Ascending aorta (tissue), 2 donors: ENCODE measurements at regions of chr11 and their contacts with region 1.

Region 1: GRCh38 chr11:12281571-12282478 is 95.5 kb upstream of the PARVA start:
- DNase-seq: peak in 1 of 2 donors; percentile 94
- H3K4me3 ChIP-seq: no peak overlapping the region
- H3K27ac ChIP-seq: peak overlapping the region; percentile 9 to 55
- H3K4me1 ChIP-seq: peaks cover 6 to 34% of the 10 kb centered on the region in 2 donors
- H3K27me3 ChIP-seq: no peaks in the 10 kb centered on the region
- CTCF ChIP-seq: peak; percentile 94 to 97 (median 97)

Region 2: DNA sequence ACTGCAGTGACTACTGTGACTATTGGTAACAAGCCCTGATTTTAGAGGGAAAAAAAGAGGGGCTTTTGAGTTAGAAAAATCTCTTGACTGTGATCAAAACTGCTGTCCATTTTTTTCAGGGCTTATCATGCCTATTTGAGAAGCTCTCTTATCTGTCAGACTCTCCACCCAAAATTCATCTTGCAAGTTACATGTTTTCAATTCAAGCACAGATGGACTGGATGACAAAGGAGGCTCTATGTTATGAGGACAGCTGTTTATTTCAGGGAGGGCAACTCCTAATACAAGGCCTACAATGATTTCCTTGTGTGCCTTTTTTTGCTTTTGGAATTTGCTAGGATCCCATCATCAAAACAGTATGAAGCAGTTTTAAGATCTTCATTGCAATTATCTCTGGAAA is 475.2 kb before region 1 on chr11:
- intact Hi-C with region 1: loop called (anchors 10 kb)
- DNase-seq: no peak
- H3K4me3 ChIP-seq: no peak overlapping the region
- H3K27ac ChIP-seq: no peak overlapping the region
- H3K4me1 ChIP-seq: peaks cover 0 to 3% of the 10 kb centered on the region in 2 donors
- H3K27me3 ChIP-seq: no peaks in the 10 kb centered on the region
- CTCF ChIP-seq: no peak

Region 3: DNA sequence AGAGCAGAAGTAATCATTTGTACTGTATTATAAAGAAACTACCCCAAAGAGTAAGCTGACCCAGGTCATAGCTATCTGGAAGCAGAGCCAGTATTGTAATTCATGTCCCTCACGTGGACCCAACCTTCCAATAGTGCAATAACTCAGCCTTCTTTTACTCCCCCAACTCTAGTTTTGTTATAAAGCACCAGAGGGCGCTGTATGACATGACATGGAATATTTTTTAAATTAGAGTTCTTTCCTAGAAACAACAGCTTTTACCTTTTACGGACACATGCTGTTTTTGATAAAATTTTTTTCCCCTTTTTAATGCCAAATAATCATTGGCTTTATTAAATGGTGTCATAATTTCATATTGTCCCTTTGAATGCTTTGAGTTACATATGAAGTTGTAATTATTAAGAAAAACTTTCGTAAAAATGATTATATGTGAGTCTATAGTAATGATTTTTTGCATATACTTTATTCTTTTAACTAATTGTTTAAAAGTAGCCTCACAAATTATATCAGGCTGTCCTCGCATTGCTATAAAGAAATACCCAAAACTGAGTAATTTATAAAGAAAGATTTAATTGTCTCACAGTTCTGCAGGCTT is 350.3 kb before region 1 on chr11:
- intact Hi-C with region 1: loop called (anchors 5 kb)
- DNase-seq: no peak
- H3K4me3 ChIP-seq: no peak overlapping the region
- H3K27ac ChIP-seq: no peak overlapping the region
- H3K4me1 ChIP-seq: no peaks in the 10 kb centered on the region
- H3K27me3 ChIP-seq: no peaks in the 10 kb centered on the region
- CTCF ChIP-seq: peak; percentile 69 to 74 (median 71)

Region 4: GRCh38 chr11:11977206-11977938 is 304.5 kb before region 1 on chr11:
- intact Hi-C with region 1: loop called (anchors 10 kb)
- DNase-seq: peak in 1 of 2 donors; percentile 92
- H3K4me3 ChIP-seq: peak overlapping the region in 1 of 2 donors; percentile 17
- H3K27ac ChIP-seq: peak overlapping the region; percentile 81 to 83
- H3K4me1 ChIP-seq: peaks cover 43 to 90% of the 10 kb centered on the region in 2 donors
- H3K27me3 ChIP-seq: no peaks in the 10 kb centered on the region
- CTCF ChIP-seq: no peak

Region 5: GRCh38 chr11:12122083-12122482 is 159.7 kb before region 1 on chr11:
- intact Hi-C with region 1: loop called (anchors 5 kb)
- DNase-seq: peak in 1 of 2 donors; percentile 4
- H3K4me3 ChIP-seq: peak overlapping the region in 1 of 2 donors; percentile 14
- H3K27ac ChIP-seq: peak overlapping the region; percentile 71 to 92
- H3K4me1 ChIP-seq: peaks cover 33 to 93% of the 10 kb centered on the region in 2 donors
- H3K27me3 ChIP-seq: no peaks in the 10 kb centered on the region
- CTCF ChIP-seq: peak; percentile 58 to 65 (median 61)

Region 6: GRCh38 chr11:12248338-12248737 is 33.5 kb before region 1 on chr11:
- intact Hi-C with region 1: no loop called
- DNase-seq: no peak
- H3K4me3 ChIP-seq: no peak overlapping the region
- H3K27ac ChIP-seq: peak overlapping the region; percentile 68 to 94
- H3K4me1 ChIP-seq: peaks cover 27 to 48% of the 10 kb centered on the region in 2 donors
- H3K27me3 ChIP-seq: no peaks in the 10 kb centered on the region
- CTCF ChIP-seq: no peak

Region 7: DNA sequence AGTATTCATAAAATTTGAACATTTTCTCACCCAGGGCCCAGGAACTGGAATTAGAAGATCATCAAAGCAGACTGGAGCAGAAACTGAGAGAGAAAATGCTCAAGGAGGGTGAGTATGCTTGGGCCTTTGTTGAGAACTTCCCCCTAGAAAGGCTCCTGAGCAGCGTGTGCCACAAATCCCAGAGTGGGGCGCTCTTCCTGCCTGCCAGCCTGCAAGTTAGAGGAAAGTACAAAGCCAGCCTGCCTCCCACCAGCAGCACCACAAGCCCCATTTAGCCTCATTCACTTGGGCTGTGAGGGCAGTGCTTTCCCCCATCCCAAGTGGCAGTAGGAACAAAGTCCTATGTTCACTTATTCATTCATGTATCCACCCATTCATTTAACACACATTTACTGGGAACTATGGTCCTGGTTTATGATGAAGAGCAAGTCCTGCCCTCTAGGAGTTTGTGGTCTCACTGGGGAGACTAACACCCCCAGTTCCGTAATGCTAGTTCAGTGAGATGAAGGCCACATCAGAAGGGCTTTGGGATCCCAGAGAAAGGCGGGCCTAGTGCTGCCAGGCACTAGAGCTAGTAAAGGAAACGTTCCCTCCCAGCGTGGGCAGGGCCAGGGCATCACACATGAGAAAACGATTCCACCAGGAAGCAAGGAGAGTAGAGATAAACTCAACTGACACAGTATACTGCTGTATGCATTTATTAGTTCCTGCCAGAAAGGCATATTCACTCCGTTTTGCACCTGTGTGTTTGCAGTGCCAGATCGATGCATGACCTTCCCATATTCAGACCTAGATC is 73.1 kb after region 1 on chr11:
- intact Hi-C with region 1: no loop called
- DNase-seq: no peak
- H3K4me3 ChIP-seq: no peak overlapping the region
- H3K27ac ChIP-seq: no peak overlapping the region
- H3K4me1 ChIP-seq: no peaks in the 10 kb centered on the region
- H3K27me3 ChIP-seq: no peaks in the 10 kb centered on the region
- CTCF ChIP-seq: no peak